GM12878 (cell line): ENCODE measurements at regions of chr3 and their contacts with region 1.

Region 1: GRCh38 chr3:115876876-115877614 is 253.7 kb downstream of the GAP43 start:
- DNase-seq: no peak
- ATAC-seq: no peak
- H3K4me3 ChIP-seq: no peak overlapping the region
- H3K27ac ChIP-seq: no peak overlapping the region
- H3K4me1 ChIP-seq: no peaks in the 10 kb centered on the region
- H3K27me3 ChIP-seq: no peaks in the 10 kb centered on the region
- CTCF ChIP-seq: no peak
- EP300 ChIP-seq: no peak
- POLR2A ChIP-seq: no peak
- RAD21 ChIP-seq: no peak

Region 2: GRCh38 chr3:116809208-116809607 is 932.2 kb after region 1 on chr3:
- CTCF ChIA-PET with region 1: no interaction called
- POLR2A ChIA-PET with region 1: interaction called, 10 read pairs
- RAD21 ChIA-PET with region 1: no interaction called
- SMC1A ChIA-PET with region 1: no interaction called
- in situ Hi-C with region 1: no loop called
- intact Hi-C with region 1: no loop called
- DNase-seq: no peak
- ATAC-seq: no peak
- H3K4me3 ChIP-seq: no peak overlapping the region
- H3K27ac ChIP-seq: no peak overlapping the region
- H3K4me1 ChIP-seq: no peaks in the 10 kb centered on the region
- H3K27me3 ChIP-seq: no peaks in the 10 kb centered on the region
- CTCF ChIP-seq: no peak
- EP300 ChIP-seq: no peak
- POLR2A ChIP-seq: no peak
- RAD21 ChIP-seq: no peak